ENCODE measurements at regions of chr13 and their contacts with region 1.

Region 1: DNA sequence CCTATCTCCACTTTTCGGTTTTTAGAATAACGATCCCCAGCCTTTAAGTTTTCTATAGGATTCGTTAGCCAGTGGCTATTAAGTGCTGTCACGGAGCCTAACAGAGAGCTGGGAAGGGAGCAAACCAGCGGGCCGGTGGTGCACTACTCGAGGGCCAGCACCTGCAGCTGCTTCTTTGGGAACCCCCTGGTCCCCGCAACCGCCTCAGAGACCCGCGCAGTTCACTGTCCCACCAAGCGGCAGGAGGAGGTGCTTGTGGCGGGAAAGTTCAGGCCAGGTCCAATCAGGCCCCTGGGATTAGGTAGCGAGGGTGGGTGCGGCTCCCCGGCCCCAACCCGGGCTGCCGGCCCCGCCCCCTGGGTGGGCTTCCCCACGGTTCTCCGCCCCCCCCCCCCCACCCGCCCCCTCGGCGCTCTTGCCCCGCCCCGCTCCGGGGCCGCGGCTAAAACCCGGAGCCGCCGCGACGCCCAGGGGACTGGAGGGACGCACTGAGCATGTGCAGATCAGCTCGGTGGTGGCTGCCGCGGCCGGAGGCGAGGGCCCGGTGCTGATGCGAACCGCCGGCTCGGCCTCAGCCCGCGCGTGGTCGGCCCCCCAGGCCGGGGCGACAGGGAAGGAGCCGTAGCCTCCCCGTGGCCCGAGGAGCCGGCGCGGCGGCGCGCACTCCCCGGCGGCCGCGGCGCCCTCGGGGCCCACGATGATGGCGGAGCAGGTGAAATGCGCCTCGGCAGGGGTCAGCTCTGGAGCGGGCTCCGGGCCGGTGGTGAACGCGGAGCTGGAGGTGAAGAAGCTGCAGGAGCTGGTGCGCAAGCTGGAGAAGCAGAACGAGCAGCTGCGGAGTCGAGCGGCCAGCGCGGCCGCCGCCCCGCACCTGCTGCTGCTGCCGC is at the start of gene SLAIN1:
- DNase-seq: peak; percentile 91
- ATAC-seq: peak; percentile 87
- H3K4me3 ChIP-seq: peak within 1 kb of the TSS; percentile 71 to 97 (median 80)
- H3K4me3 Mint-ChIP-seq: peak within 1 kb of the TSS; percentile 97
- H3K27ac ChIP-seq: peak within 1 kb of the TSS; percentile 71 to 84
- H3K27ac Mint-ChIP-seq: peak within 1 kb of the TSS; percentile 79
- H3K4me1 ChIP-seq: peaks cover 16 to 18% of the 10 kb centered on the region in 2 donors
- H3K4me1 Mint-ChIP-seq: peaks cover 26% of the 10 kb centered on the region
- H3K27me3 ChIP-seq: no peaks in the 10 kb centered on the region
- H3K27me3 Mint-ChIP-seq: no peaks in the 10 kb centered on the region
- CTCF ChIP-seq: no peak
- total RNA-seq, gene SLAIN1: 25.2 and 29.5 TPM in 2 replicates

Region 2: GRCh38 chr13:76086729-76087128 is 1610.7 kb before region 1 on chr13:
- CTCF ChIA-PET with region 1: no interaction called
- POLR2A ChIA-PET with region 1: no interaction called
- intact Hi-C with region 1: no loop called
- DNase-seq: no peak
- ATAC-seq: no peak
- H3K4me3 ChIP-seq: no peak overlapping the region
- H3K4me3 Mint-ChIP-seq: no peak overlapping the region
- H3K27ac ChIP-seq: no peak overlapping the region
- H3K27ac Mint-ChIP-seq: no peak overlapping the region
- H3K4me1 ChIP-seq: no peaks in the 10 kb centered on the region
- H3K4me1 Mint-ChIP-seq: no peaks in the 10 kb centered on the region
- H3K27me3 ChIP-seq: no peaks in the 10 kb centered on the region
- H3K27me3 Mint-ChIP-seq: no peaks in the 10 kb centered on the region
- CTCF ChIP-seq: no peak

Region 3: GRCh38 chr13:76886292-76887075 is 811.0 kb before region 1 on chr13 and contains the start of gene KCTD12:
- CTCF ChIA-PET with region 1: no interaction called
- POLR2A ChIA-PET with region 1: no interaction called
- intact Hi-C with region 1: loop called (anchors 1 kb)
- DNase-seq: peak; percentile 90
- ATAC-seq: peak; percentile 79
- H3K4me3 ChIP-seq: peak within 1 kb of the TSS; percentile 45 to 67 (median 64)
- H3K4me3 Mint-ChIP-seq: peak within 1 kb of the TSS; percentile 96
- H3K27ac ChIP-seq: peak within 1 kb of the TSS in 1 of 2 donors; percentile 40
- H3K27ac Mint-ChIP-seq: peak within 1 kb of the TSS; percentile 88
- H3K4me1 ChIP-seq: peaks cover 7 to 24% of the 10 kb centered on the region in 2 donors
- H3K4me1 Mint-ChIP-seq: peaks cover 28% of the 10 kb centered on the region
- H3K27me3 ChIP-seq: peaks cover 0 to 3% (median 0%) of the 10 kb centered on the region in 4 experiments
- H3K27me3 Mint-ChIP-seq: peaks cover 3% of the 10 kb centered on the region
- CTCF ChIP-seq: peak; percentile 41
- total RNA-seq, gene KCTD12: 6.2 TPM in 2 replicates

Region 4: GRCh38 chr13:77026818-77027585 is 670.5 kb before region 1 on chr13 and contains the start of gene FBXL3:
- CTCF ChIA-PET with region 1: no interaction called
- POLR2A ChIA-PET with region 1: no interaction called
- intact Hi-C with region 1: loop called (anchors 2 kb)
- DNase-seq: peak; percentile 91
- ATAC-seq: peak; percentile 64
- H3K4me3 ChIP-seq: peak within 1 kb of the TSS; percentile 66 to 91 (median 88)
- H3K4me3 Mint-ChIP-seq: peak within 1 kb of the TSS; percentile 99
- H3K27ac ChIP-seq: peak within 1 kb of the TSS; percentile 84 to 95
- H3K27ac Mint-ChIP-seq: peak within 1 kb of the TSS; percentile 98
- H3K4me1 ChIP-seq: peaks cover 26 to 42% of the 10 kb centered on the region in 2 donors
- H3K4me1 Mint-ChIP-seq: peaks cover 49% of the 10 kb centered on the region
- H3K27me3 ChIP-seq: no peaks in the 10 kb centered on the region
- H3K27me3 Mint-ChIP-seq: no peaks in the 10 kb centered on the region
- CTCF ChIP-seq: no peak
- total RNA-seq, gene FBXL3: 78.0 and 79.5 TPM in 2 replicates

Region 5: GRCh38 chr13:77751513-77752456 is 54.3 kb after region 1 on chr13:
- CTCF ChIA-PET with region 1: no interaction called
- POLR2A ChIA-PET with region 1: no interaction called
- intact Hi-C with region 1: loop called (anchors 5 kb)
- DNase-seq: peak; percentile 65
- ATAC-seq: peak; percentile 36
- H3K4me3 ChIP-seq: no peak overlapping the region
- H3K4me3 Mint-ChIP-seq: no peak overlapping the region
- H3K27ac ChIP-seq: no peak overlapping the region
- H3K27ac Mint-ChIP-seq: no peak overlapping the region
- H3K4me1 ChIP-seq: no peaks in the 10 kb centered on the region
- H3K4me1 Mint-ChIP-seq: no peaks in the 10 kb centered on the region
- H3K27me3 ChIP-seq: no peaks in the 10 kb centered on the region
- H3K27me3 Mint-ChIP-seq: no peaks in the 10 kb centered on the region
- CTCF ChIP-seq: peak; percentile 90

Region 6: DNA sequence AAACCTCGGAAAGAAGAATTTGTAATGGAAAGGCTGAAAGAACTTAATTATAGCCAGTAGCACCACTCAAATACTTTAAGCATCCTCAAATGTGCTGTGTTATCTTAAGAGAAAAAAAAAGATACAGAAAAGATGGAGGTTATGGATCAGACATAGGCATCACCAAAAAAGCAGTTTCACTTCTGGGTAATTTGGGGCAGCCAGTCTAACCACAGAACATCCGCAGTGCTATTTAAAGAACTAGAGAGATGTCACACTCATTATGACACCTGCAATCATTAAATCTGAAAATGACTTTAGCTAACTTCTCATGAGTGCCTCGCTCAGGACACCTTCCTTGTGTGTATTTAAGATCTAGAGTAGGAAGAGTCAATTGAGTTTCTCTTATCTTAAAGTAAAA is 1496.8 kb after region 1 on chr13:
- CTCF ChIA-PET with region 1: no interaction called
- POLR2A ChIA-PET with region 1: no interaction called
- intact Hi-C with region 1: loop called (anchors 10 kb)
- DNase-seq: peak; percentile 86
- ATAC-seq: peak; percentile 77
- H3K4me3 ChIP-seq: peak overlapping the region in 2 of 5 experiments; percentile 26 to 45
- H3K4me3 Mint-ChIP-seq: peak overlapping the region; percentile 24
- H3K27ac ChIP-seq: peak overlapping the region in 1 of 2 donors; percentile 47
- H3K27ac Mint-ChIP-seq: peak overlapping the region; percentile 35
- H3K4me1 ChIP-seq: peaks cover 63 to 67% of the 10 kb centered on the region in 2 donors
- H3K4me1 Mint-ChIP-seq: peaks cover 62% of the 10 kb centered on the region
- H3K27me3 ChIP-seq: no peaks in the 10 kb centered on the region
- H3K27me3 Mint-ChIP-seq: no peaks in the 10 kb centered on the region
- CTCF ChIP-seq: no peak

Region 7: GRCh38 chr13:79405829-79406596 is 1708.6 kb after region 1 on chr13 and contains the start of gene RBM26:
- CTCF ChIA-PET with region 1: no interaction called
- POLR2A ChIA-PET with region 1: no interaction called
- intact Hi-C with region 1: loop called (anchors 5 kb)
- DNase-seq: peak; percentile 97
- ATAC-seq: peak; percentile 84
- H3K4me3 ChIP-seq: peak within 1 kb of the TSS; percentile 69 to 95 (median 87)
- H3K4me3 Mint-ChIP-seq: no peak within 1 kb of the TSS
- H3K27ac ChIP-seq: peak within 1 kb of the TSS; percentile 94 to 95
- H3K27ac Mint-ChIP-seq: peak within 1 kb of the TSS; percentile 98
- H3K4me1 ChIP-seq: peaks cover 32 to 48% of the 10 kb centered on the region in 2 donors
- H3K4me1 Mint-ChIP-seq: peaks cover 26% of the 10 kb centered on the region
- H3K27me3 ChIP-seq: no peaks in the 10 kb centered on the region
- H3K27me3 Mint-ChIP-seq: no peaks in the 10 kb centered on the region
- CTCF ChIP-seq: peak; percentile 15
- total RNA-seq, gene RBM26: 159 and 165 TPM in 2 replicates

Measured in B cell (primary cell).